OCI-LY7 (cell line): ENCODE measurements at regions of chr15 and their contacts with region 1.

Region 1: DNA sequence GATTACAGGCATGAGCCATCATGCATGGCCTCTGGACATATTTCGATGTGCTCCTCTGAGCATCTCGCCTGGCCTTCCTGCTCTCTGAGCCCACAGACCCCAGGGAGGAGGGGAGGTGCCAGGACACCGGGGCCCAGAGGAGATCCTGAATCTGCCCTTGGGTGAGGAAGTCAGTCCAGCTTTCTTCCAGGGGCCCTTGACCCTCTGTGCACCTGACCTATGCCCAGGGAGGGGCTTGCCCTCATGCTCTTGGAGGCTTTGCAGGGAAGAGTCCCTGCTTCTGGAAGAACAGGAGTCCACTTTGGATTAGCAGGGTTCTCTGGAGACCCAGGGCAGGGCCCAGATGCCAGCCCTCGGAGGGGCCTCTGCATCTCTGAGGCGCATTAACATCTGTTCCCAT is 1.4 kb downstream of the ACSBG1 start:
- DNase-seq: no peak
- H3K4me3 ChIP-seq: no peak overlapping the region
- H3K27ac ChIP-seq: no peak overlapping the region
- H3K4me1 ChIP-seq: no peaks in the 10 kb centered on the region
- CTCF ChIP-seq: no peak

Region 2: DNA sequence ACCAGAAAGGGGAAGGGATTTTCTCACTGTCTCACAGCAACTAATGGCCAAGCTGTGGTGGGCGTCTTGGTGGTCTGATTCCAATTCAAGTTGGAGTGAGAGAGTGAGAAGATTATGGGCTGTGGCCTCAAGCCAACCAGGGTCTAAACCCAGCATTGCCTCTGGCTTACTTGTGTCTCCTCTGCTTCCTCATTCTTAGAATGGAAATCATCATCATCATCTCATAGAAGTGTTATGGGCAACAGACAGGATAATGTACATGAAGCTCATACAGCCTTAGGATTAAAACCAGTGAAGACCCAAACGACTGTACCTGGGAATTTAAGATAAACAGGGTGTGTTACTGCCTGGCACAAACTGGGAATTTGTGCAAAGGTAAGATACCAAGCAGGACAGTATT is 176.0 kb after region 1 on chr15:
- CTCF ChIA-PET with region 1: interaction called, 14 read pairs
- POLR2A ChIA-PET with region 1: no interaction called
- intact Hi-C with region 1: no loop called
- DNase-seq: no peak
- H3K4me3 ChIP-seq: no peak overlapping the region
- H3K27ac ChIP-seq: no peak overlapping the region
- H3K4me1 ChIP-seq: no peaks in the 10 kb centered on the region
- CTCF ChIP-seq: no peak